Activated CD4-positive, alpha-beta memory T cell treated with anti-CD3 and anti-CD28 coated beads for 36 hours (primary cell): ENCODE measurements at regions of chr3 and their contacts with region 1.

Region 1: GRCh38 chr3:13452490-13453335 is 27.4 kb upstream of the HDAC11 start:
- DNase-seq: peak; percentile 37
- H3K4me3 Mint-ChIP-seq: peak overlapping the region; percentile 80
- H3K27ac Mint-ChIP-seq: peak overlapping the region; percentile 88
- H3K4me1 Mint-ChIP-seq: peaks cover 16% of the 10 kb centered on the region
- H3K27me3 Mint-ChIP-seq: no peaks in the 10 kb centered on the region

Region 2: DNA sequence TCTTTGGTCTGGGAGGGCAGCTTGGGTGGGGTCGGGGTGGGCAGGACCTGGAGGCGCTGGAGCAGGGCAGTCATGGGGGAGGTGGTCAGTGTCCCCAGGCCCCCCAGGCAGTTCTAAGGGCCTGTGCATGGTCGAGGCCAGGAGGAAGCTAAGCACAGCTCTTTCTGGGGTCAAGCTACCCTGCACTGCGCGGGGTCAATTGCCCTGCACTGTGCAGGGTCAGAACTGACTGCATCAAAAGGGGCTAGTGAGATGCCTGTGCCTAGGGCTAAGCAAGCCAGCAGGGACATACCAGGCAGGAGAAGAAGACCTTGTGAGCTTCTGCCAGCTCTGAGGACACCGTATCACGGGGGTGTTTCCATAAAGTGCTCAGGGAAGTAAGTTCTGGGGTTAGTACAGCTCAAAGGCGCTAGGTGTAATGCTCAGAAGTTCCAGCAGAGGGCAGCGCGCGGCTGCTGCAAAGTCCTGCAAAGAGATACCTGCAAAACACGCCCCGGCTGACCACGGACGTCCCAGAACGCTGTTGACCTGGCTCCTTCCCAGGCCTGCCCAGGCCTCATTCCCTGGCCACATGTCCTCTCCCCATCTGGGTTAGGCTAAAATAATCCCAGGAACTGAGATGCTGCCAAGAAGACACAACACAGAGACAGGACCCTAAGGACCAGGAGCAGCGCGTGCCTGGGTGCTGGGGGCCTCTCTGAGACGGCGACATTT is 360.7 kb before region 1 on chr3:
- CTCF ChIA-PET with region 1: interaction called, 69 read pairs
- POLR2A ChIA-PET with region 1: no interaction called
- intact Hi-C with region 1: loop called (anchors 2 kb)
- DNase-seq: peak; percentile 86
- H3K4me3 Mint-ChIP-seq: no peak overlapping the region
- H3K27ac Mint-ChIP-seq: no peak overlapping the region
- H3K4me1 Mint-ChIP-seq: no peaks in the 10 kb centered on the region
- H3K27me3 Mint-ChIP-seq: peaks cover 3% of the 10 kb centered on the region

Region 3: GRCh38 chr3:13346481-13347389 is 106.0 kb before region 1 on chr3:
- CTCF ChIA-PET with region 1: interaction called, 108 read pairs
- POLR2A ChIA-PET with region 1: interaction called, 9 read pairs
- intact Hi-C with region 1: loop called (anchors 1 kb)
- DNase-seq: peak; percentile 91
- H3K4me3 Mint-ChIP-seq: no peak overlapping the region
- H3K27ac Mint-ChIP-seq: peak overlapping the region; percentile 82
- H3K4me1 Mint-ChIP-seq: peaks cover 56% of the 10 kb centered on the region
- H3K27me3 Mint-ChIP-seq: no peaks in the 10 kb centered on the region

Region 4: GRCh38 chr3:13391308-13391707 is 61.4 kb before region 1 on chr3:
- CTCF ChIA-PET with region 1: interaction called, 46 read pairs
- POLR2A ChIA-PET with region 1: no interaction called
- intact Hi-C with region 1: loop called (anchors 1 kb)
- DNase-seq: peak; percentile 23
- H3K4me3 Mint-ChIP-seq: no peak overlapping the region
- H3K27ac Mint-ChIP-seq: no peak overlapping the region
- H3K4me1 Mint-ChIP-seq: peaks cover 10% of the 10 kb centered on the region
- H3K27me3 Mint-ChIP-seq: no peaks in the 10 kb centered on the region

Region 5: GRCh38 chr3:13405614-13406013 is 47.1 kb before region 1 on chr3:
- CTCF ChIA-PET with region 1: interaction called, 12 read pairs
- POLR2A ChIA-PET with region 1: no interaction called
- intact Hi-C with region 1: no loop called
- DNase-seq: no peak
- H3K4me3 Mint-ChIP-seq: no peak overlapping the region
- H3K27ac Mint-ChIP-seq: peak overlapping the region; percentile 40
- H3K4me1 Mint-ChIP-seq: peaks cover 33% of the 10 kb centered on the region
- H3K27me3 Mint-ChIP-seq: no peaks in the 10 kb centered on the region

Region 6: DNA sequence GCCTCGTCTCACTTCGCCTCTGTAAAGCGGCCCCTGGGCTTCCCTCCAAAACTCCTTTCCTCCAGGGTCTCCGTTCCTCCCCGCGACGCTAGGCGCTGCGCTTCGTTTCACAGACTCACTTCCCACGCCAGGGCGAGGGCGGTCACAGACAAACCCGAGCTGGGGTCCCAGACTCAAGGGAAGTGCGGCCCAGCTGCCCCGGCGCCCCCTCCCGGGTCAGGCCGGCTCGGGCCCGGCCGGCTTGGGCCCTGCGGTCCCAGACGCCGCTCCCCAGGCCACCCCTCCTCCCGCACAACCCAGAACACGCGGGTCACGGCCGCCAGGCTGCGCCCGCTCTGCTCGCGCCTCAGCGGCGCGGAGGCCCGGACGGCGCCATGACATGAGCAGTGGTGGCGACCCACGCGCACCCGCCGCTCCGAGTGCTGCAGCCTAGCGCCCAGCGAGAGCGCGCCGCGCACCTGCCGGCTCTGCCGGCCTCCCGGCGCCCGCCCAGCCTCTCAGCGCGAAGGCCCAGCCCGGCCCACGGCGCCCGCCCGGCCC is 33.1 kb before region 1 on chr3:
- CTCF ChIA-PET with region 1: interaction called, 105 read pairs
- POLR2A ChIA-PET with region 1: interaction called, 27 read pairs
- intact Hi-C with region 1: loop called (anchors 1 kb)
- DNase-seq: peak; percentile 68
- H3K4me3 Mint-ChIP-seq: peak overlapping the region; percentile 90
- H3K27ac Mint-ChIP-seq: peak overlapping the region; percentile 90
- H3K4me1 Mint-ChIP-seq: peaks cover 57% of the 10 kb centered on the region
- H3K27me3 Mint-ChIP-seq: no peaks in the 10 kb centered on the region

Region 7: DNA sequence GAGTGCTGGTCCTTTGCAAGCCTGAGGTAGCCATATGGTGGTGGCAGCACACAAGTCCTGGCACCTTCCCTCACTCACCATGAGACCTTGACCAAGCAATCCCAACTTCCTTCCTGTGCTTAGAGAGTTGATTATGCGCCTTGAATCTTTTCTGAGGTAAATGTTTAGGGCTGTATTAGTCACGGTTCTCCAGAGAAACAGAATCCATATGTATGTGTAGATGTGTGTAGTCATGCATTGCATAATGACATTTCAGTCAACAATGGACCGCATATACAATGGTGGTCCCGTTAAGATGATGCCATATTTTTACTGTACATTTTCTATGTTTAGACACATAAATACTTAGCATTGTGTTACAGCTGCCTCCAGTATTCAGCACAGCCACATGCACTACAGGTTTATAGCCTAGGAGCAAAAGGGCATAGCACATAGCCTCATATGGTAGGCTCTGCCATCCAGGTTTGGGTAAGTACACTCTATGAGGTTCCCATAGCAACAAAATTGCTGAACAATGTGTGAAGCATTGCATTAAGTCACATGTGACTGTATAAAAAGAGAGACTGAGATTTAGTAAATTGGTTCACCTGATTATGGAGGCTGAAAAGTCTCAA is 12.4 kb before region 1 on chr3:
- CTCF ChIA-PET with region 1: interaction called, 14 read pairs
- POLR2A ChIA-PET with region 1: no interaction called
- intact Hi-C with region 1: no loop called
- DNase-seq: no peak
- H3K4me3 Mint-ChIP-seq: no peak overlapping the region
- H3K27ac Mint-ChIP-seq: no peak overlapping the region
- H3K4me1 Mint-ChIP-seq: no peaks in the 10 kb centered on the region
- H3K27me3 Mint-ChIP-seq: peaks cover 3% of the 10 kb centered on the region

Region 8: GRCh38 chr3:13564751-13565560 is 112.2 kb after region 1 on chr3:
- CTCF ChIA-PET with region 1: no interaction called
- POLR2A ChIA-PET with region 1: no interaction called
- intact Hi-C with region 1: no loop called
- DNase-seq: no peak
- H3K4me3 Mint-ChIP-seq: no peak overlapping the region
- H3K27ac Mint-ChIP-seq: no peak overlapping the region
- H3K4me1 Mint-ChIP-seq: no peaks in the 10 kb centered on the region
- H3K27me3 Mint-ChIP-seq: peaks cover 6% of the 10 kb centered on the region

Region 9: DNA sequence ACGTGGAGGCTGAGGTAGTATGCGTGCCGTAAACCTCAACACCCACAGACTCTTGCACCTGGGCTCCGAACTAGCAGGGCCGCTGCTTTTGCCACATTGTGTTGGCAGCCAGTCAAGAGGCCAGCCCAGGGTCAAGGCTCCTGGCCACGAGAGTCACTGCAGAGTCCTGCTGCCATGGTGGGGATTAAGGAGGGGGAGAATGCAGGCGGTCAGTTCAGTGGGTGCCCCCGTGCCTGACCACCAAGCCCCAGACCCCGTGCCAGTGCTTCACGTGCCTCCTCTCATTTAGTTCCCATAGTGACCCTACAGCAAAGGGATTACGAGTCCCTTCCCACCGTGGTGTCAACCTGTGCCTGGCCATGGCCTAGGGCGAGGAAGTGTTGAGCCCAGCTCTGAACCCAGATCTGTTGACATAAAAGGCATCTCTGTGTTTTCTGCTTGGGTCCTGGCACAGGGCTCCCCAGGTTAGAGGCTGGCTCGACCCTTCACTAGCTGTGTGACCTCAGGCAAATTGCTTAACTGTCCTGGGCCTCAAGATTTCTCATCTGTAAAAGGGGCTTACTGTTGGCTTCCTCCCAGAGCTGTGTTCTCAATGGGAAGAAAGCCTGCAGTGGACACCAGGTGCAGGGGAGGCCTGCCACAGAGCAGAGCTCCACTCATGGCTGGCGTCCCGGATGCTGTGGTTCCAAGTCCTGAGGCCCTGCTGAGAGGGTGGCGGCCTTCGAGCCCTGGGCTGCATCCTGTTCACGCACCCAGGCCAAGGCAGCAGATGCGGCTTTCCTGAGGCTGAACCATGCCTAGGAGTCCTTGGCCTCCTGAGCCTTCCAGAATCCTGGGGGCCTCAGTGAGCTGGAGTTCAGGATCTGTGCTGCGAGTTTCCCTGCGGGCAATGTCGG is 129.0 kb after region 1 on chr3:
- CTCF ChIA-PET with region 1: no interaction called
- POLR2A ChIA-PET with region 1: no interaction called
- intact Hi-C with region 1: no loop called
- DNase-seq: no peak
- H3K4me3 Mint-ChIP-seq: no peak overlapping the region
- H3K27ac Mint-ChIP-seq: no peak overlapping the region
- H3K4me1 Mint-ChIP-seq: no peaks in the 10 kb centered on the region
- H3K27me3 Mint-ChIP-seq: no peaks in the 10 kb centered on the region

Region 10: GRCh38 chr3:13638927-13639326 is 186.2 kb after region 1 on chr3:
- CTCF ChIA-PET with region 1: no interaction called
- POLR2A ChIA-PET with region 1: no interaction called
- intact Hi-C with region 1: no loop called
- DNase-seq: no peak
- H3K4me3 Mint-ChIP-seq: no peak overlapping the region
- H3K27ac Mint-ChIP-seq: no peak overlapping the region
- H3K4me1 Mint-ChIP-seq: no peaks in the 10 kb centered on the region
- H3K27me3 Mint-ChIP-seq: no peaks in the 10 kb centered on the region